ENCODE measurements at regions of chr13 and their contacts with region 1.

Region 1: GRCh38 chr13:48492470-48493065 is 40.3 kb downstream of the RCBTB2 start:
- DNase-seq: peak; percentile 90
- ATAC-seq: peak; percentile 93

Region 2: GRCh38 chr13:48448959-48449614 is 43.5 kb before region 1 on chr13:
- intact Hi-C with region 1: loop called (anchors 5 kb)
- DNase-seq: no peak
- ATAC-seq: peak; percentile 59

Measured in Right ventricle myocardium superior (tissue), 1 donor.